Stomach (tissue), 19 donors: ENCODE measurements at regions of chr7 and their contacts with region 1.

Region 1: DNA sequence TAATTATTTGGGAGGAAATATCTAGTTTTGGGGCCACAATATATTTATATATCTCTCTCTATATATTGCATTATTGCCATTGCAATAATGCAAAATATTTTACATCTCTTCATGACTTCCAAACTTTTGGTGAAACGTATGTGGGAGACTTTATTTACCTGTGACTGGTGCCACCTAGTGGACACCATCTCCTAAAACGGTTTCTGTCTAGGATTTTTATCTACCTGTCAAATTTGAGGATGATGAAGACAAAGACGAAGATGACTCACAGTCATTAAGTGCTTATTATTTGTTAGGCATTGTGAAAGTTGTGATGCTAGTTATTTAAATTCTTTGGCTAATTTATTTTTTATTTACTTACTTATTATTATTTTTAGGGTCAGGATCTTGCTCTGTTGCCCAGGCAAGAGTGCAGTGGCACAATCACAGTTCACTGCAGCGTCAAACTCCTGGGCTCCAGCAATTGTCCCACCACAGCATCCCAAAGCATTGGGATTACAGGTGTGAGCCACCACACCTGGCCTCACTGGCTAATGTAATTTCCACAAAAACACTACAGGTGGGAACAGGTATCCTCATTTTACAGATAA is 18.7 kb upstream of the CBLL1 start:
- DNase-seq: peak; percentile 53 to 83
- H3K4me3 ChIP-seq: no peak overlapping the region
- H3K27ac ChIP-seq: no peak overlapping the region
- H3K4me1 ChIP-seq: no peaks in the 10 kb centered on the region
- H3K27me3 ChIP-seq: peaks cover 0 to 5% (median 0%) of the 10 kb centered on the region in 3 donors
- CTCF ChIP-seq: peak in 5 of 7 experiments; percentile 48 to 66 (median 60)
- EP300 ChIP-seq: no peak
- POLR2A ChIP-seq: no peak

Region 2: DNA sequence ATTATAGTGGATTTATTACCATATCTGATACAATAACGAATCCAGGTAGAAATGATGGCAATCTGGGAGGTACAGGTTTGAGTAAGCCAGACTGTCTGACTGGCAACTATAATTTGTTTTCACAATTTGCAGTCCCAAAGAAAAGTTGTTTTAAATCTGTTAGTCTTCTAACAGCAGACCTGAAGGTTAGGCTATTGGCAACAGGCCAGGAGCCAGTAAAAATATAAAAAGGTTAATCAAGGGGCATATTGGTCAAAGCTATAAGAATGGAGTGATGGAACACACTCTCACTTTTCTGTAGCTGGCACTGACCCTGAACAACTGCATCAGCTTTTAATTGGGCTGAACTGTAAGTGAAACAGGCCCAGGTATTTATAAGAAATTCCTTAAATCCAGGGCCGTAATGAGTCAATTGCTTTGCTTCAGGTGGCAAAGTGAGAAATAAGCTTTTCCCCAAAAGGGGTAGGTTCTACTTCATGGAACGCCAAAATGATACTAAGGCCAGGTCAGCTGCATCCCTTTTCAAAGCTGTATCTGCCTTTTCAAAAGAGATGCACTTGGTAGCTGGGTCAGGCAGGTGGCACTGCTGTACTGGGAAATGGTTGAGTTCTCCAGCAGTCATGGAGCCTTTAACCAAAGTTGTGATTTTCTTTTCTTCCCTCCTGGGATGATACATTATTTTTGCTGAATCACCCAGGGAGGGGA is 262.4 kb before region 1 on chr7:
- intact Hi-C with region 1: loop called (anchors 5 kb)
- DNase-seq: peak; percentile 58 to 84
- H3K4me3 ChIP-seq: no peak overlapping the region
- H3K27ac ChIP-seq: no peak overlapping the region
- H3K4me1 ChIP-seq: no peaks in the 10 kb centered on the region
- H3K27me3 ChIP-seq: no peaks in the 10 kb centered on the region
- CTCF ChIP-seq: peak in 5 of 7 experiments; percentile 53 to 84 (median 65)
- EP300 ChIP-seq: no peak
- POLR2A ChIP-seq: no peak

Region 3: GRCh38 chr7:107579885-107580715 is 145.1 kb before region 1 on chr7 and contains the start of gene BCAP29:
- intact Hi-C with region 1: no loop called
- DNase-seq: peak; percentile 74 to 93
- H3K4me3 ChIP-seq: peak within 1 kb of the TSS; percentile 72 to 85 (median 74)
- H3K27ac ChIP-seq: peak within 1 kb of the TSS; percentile 91 to 98 (median 94)
- H3K4me1 ChIP-seq: peaks cover 13 to 39% (median 25%) of the 10 kb centered on the region in 4 donors
- H3K27me3 ChIP-seq: no peaks in the 10 kb centered on the region
- CTCF ChIP-seq: peak in 2 of 7 experiments; percentile 27 to 30
- EP300 ChIP-seq: no peak
- POLR2A ChIP-seq: no peak
- total RNA-seq, gene BCAP29: 44.6 to 73.1 (median 50.0) TPM